Activated T-helper 2 cell treated with anti-CD3 and anti-CD28 coated beads, Interferon-gamma antibody, Interleukin-2, Interleukin-4, amounts not matched to agents 10 μg/mL and 5 μg/mL and 100 μg/mL, durations not matched to agents 14 hours and 24 hours and 36 hours (primary cell): ENCODE measurements at regions of chr15 and their contacts with region 1.

Region 1: DNA sequence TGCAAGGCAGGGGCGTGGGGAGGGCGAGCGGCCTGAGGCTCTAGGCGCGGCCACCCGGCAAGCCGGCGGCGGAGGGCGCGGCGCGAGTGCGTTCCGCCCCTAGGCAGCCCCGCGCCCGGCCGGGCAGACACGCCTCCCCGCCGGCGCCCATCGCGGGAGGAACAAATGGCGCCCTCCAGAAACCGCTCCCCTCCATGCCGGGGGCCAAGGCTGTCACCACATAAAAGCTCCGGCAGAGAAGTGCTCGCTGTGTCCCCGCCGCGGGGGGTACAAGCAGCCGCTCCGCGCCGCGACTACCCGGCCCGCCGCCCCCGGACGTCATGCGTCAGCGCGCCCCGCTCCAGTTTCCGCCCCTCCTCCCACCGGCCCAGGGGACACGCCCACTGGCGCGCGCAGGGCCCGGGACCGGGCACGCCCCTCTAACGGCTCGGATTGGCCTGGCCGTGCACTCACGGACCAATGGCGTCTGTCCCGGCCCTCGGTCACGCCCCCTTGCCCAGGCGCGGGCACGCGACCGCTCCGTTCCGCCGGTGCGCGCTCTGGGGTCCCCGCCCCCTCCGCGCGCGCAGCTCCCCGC is 391 bp upstream of the KLF13 start:
- DNase-seq: peak; percentile 100
- H3K4me3 Mint-ChIP-seq: peak overlapping the region; percentile 77
- H3K27ac Mint-ChIP-seq: peak overlapping the region; percentile 77
- H3K4me1 Mint-ChIP-seq: peaks cover 39% of the 10 kb centered on the region
- H3K27me3 Mint-ChIP-seq: no peaks in the 10 kb centered on the region

Region 2: GRCh38 chr15:30991255-30992072 is 334.8 kb before region 1 on chr15 and contains the start of gene MTMR10:
- intact Hi-C with region 1: loop called (anchors 2 kb)
- DNase-seq: peak; percentile 75
- H3K4me3 Mint-ChIP-seq: peak within 1 kb of the TSS; percentile 90
- H3K27ac Mint-ChIP-seq: peak within 1 kb of the TSS; percentile 83
- H3K4me1 Mint-ChIP-seq: peaks cover 19% of the 10 kb centered on the region
- H3K27me3 Mint-ChIP-seq: peaks cover 10% of the 10 kb centered on the region
- total RNA-seq, gene MTMR10: 12.2 and 14.1 TPM in 2 replicates

Region 3: DNA sequence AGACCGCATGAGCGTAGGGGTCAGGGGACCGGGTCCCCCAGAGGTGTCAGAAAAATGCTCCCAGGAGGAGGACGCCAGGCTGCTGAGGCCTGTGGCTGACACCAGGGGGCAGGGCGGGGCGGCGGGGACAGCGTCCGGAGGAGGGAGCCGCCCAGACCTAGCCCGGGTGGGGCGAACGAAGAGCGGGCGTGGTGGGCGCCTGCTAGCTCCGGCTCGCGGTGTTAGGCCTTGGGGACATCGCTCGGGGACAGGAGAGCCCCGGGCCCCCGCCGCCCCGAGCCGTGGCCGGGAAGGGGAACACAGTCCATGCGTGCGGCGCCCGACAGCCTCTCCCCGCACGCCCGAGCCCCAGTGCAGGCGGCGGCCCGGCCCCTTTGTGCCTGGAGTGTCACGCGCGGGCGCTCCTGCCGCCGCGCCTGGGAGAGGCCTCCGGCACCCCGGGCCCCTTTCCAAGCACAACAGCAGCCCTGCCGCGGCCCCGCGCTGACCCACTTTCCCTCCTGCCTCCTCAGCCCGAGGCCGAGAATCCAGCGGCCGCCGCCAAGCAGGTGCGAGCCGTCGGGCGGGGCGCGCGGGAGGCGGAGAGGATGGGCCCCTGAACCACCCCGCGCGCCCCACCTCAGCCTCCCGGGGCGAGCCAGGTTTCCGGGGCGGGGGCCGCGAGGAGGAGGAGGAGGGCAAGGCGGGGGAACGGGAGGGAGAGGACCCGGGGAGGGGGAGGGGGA is 110.6 kb before region 1 on chr15:
- intact Hi-C with region 1: loop called (anchors 1 kb)
- DNase-seq: peak; percentile 76
- H3K4me3 Mint-ChIP-seq: peak overlapping the region; percentile 67
- H3K27ac Mint-ChIP-seq: peak overlapping the region; percentile 33
- H3K4me1 Mint-ChIP-seq: peaks cover 28% of the 10 kb centered on the region
- H3K27me3 Mint-ChIP-seq: no peaks in the 10 kb centered on the region

Region 4: DNA sequence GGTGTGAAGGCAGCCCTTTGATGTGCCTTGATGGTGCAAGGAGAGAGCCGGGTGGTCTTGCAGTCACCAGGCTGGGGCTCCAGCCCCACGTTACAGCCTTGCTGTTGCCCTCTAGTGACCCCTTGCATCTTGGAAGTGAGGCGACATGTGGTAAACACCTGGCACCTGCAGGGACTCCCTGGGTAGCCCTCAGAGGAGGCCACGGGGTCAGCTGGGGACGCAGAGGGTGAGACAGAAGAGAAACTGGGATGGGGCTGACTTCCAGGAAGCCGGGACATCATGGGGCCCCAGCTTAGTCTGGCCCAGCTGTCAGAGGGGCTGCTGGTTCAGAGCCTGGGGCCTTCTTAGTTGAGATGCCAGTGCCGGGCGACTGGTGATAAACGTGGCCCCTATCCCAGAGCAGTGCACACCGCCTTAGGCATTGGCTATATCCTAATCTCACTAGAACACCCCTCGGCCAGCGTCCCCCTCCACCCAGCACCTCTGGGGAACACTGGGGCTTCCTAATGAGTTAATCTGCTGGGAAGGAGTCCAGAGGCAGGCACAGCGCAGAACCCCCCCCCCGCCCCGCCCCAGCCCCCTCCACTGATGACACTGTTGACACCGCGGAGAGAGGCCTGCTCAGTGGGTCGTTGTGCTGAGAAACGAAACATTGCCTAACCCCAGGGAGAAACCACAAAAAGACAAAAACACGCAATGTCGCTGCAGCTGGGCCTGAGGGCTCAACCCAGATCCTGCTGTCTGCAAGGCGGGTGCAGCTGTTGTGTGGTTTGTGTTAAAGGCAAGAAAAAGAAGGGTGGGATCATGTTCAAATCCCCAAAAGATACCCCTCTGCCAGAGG is 60.2 kb before region 1 on chr15:
- intact Hi-C with region 1: loop called (anchors 5 kb)
- DNase-seq: peak; percentile 78
- H3K4me3 Mint-ChIP-seq: peak overlapping the region; percentile 35
- H3K27ac Mint-ChIP-seq: peak overlapping the region; percentile 74
- H3K4me1 Mint-ChIP-seq: peaks cover 78% of the 10 kb centered on the region
- H3K27me3 Mint-ChIP-seq: no peaks in the 10 kb centered on the region

Region 5: DNA sequence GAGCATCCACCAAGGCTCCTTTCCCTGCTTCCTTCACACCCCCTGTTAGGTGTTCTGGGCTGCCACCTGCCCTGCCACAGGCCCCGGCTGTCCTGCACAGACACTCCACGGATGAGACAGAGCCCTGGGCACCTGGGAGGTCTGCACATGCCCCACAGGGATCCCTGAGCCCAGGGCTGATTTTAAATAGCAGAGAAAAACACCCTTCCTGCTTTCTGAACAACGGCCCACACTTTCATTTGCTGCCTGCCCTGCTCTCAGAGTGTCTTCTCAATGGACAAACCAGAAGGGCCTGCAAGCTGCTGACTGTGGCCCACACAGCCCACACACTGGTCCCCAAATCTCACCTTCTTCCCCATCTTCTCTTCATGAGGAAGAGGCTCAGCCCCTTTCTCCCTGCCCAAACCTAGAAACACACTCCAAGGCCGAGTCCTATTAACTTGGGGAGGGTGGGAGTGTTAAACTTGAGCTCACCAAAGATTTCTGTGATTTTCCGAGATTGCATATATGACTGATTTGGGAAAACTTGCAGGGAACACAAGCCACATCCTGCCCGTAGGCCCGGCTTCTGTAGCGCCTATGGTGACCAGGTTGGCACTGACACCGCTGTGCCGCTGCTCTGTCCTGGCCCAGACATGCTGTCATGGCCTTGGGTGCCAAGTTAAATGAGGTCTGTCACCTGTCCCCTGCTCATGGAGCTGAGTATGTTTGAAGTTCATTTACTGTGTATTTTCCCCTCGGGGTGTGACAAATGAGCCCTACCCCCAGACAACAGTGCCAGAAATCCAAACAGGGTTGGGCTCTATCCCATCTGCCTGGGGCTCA is 46.8 kb before region 1 on chr15:
- intact Hi-C with region 1: no loop called
- DNase-seq: peak; percentile 6
- H3K4me3 Mint-ChIP-seq: no peak overlapping the region
- H3K27ac Mint-ChIP-seq: no peak overlapping the region
- H3K4me1 Mint-ChIP-seq: peaks cover 6% of the 10 kb centered on the region
- H3K27me3 Mint-ChIP-seq: peaks cover 7% of the 10 kb centered on the region

Region 6: GRCh38 chr15:31338879-31339557 is 12.8 kb after region 1 on chr15:
- intact Hi-C with region 1: loop called (anchors 1 kb)
- DNase-seq: no peak
- H3K4me3 Mint-ChIP-seq: no peak overlapping the region
- H3K27ac Mint-ChIP-seq: peak overlapping the region; percentile 74
- H3K4me1 Mint-ChIP-seq: peaks cover 83% of the 10 kb centered on the region
- H3K27me3 Mint-ChIP-seq: no peaks in the 10 kb centered on the region

Region 7: DNA sequence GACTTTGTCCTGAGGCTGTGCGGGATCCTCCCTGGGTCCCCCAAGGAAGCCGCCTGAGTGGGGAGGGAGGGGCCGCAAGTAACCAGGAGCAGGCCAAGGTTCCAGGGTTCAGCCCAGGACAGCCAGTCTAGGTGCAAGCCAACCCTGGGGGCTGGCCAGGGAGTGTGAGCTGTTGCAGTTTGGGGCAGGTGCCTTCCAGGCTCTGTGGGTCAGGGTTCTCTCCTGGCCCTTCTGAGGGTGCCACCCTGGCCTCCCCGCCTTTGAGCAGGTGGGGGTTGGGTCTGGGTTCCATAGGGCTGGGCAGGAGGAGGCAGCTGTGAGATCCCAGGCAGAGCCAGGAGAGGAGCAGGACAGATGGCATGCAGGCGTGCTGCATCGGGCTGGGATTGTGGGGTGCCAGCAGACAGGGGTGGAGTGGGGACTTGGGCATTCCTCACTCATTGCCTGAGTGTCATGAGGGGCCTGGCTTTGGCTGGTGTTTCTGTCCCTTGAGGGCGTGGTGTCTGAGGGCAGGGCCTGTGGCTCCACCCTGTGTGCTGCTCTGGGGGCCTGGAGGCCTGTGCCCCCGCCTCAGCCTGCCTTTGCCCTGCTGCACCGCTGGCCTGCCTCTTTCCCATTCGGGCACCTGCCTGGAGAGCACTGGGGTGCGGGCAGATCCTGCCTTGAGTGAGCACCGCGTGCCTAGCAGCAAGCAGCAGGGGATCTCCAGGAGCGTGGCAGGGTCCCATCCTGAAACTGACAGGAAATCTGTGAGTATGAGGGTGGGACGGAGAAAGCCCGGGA is 18.8 kb after region 1 on chr15:
- intact Hi-C with region 1: loop called (anchors 1 kb)
- DNase-seq: no peak
- H3K4me3 Mint-ChIP-seq: peak overlapping the region; percentile 82
- H3K27ac Mint-ChIP-seq: peak overlapping the region; percentile 97
- H3K4me1 Mint-ChIP-seq: peaks cover 87% of the 10 kb centered on the region
- H3K27me3 Mint-ChIP-seq: no peaks in the 10 kb centered on the region